PC-3 (cell line): ENCODE measurements at regions of chr7 and their contacts with region 1.

Region 1: DNA sequence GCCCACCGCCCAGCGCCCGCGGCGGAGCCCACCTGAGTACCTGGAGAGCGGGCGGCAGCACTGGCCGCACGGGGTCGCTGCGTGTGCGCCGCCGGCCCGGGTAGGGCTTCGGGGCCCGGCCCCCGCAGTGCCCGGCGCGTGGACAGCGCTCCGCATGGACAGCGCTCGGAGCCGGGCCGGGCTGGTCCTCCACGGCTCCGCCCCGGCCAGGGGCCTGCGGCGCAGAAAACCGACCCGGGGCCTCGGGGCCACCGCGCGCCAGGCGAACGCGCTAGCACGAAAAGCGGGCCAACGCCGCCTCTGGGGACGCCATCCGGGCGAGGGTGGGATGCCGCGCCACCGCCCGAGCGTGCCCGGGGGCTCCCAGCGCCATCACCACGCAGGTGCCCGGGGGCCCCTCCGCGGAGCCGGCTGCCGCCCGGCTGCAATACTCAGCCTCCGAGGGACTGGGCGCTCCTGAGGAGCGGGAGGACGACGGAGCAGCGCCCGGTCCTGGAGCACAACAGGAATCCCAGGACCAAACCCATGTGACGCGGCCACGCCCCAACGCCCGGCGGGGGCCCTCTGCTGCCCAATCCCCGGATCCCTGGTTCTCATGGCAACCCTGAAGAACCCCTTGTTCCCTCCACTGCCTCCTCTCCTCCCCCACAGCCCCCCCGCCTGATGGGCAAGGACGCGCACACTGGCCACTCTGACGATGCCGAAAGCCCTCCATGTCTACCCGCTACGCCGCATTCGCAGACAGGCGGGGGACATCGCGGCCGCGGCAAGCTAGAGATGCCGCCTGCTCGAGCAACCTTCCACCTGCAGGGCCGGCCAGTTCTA is at the start of gene GRB10:
- DNase-seq: peak; percentile 56
- ATAC-seq: peak; percentile 84
- H3K4me3 ChIP-seq: peak within 1 kb of the TSS; percentile 80
- H3K27ac ChIP-seq: peak within 1 kb of the TSS; percentile 57
- H3K4me1 ChIP-seq: peaks cover 7% of the 10 kb centered on the region; the same call in 1 of the 2 replicates
- H3K27me3 ChIP-seq: no peaks in the 10 kb centered on the region
- CTCF ChIP-seq: 0 out of 2 replicates have a peak, but pooled peaks have one; percentile 26
- total RNA-seq, gene GRB10: 61.3 and 89.8 TPM in 2 replicates

Region 2: DNA sequence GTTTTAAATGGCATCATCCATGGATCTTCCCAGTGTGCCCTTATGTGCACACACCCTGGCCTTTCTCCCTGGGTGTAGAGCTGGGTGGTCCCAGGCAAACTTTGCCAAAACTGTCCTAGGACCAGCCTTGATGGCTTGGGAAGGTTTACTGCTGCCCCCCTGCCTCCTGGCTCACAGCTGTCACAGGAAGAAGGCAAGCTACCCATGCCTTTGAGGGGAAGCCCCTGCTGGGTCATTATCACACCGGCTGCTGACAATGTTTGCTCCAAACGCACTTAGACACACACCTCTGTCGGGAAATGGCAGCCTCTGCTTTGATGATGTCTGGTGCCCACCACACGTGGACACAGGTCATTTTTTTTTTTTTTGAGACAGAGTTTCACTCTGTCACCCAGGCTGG is 307.3 kb before region 1 on chr7:
- CTCF ChIA-PET with region 1: no interaction called
- POLR2A ChIA-PET with region 1: no interaction called
- intact Hi-C with region 1: no loop called
- DNase-seq: no peak
- ATAC-seq: no peak
- H3K4me3 ChIP-seq: no peak overlapping the region
- H3K27ac ChIP-seq: no peak overlapping the region
- H3K4me1 ChIP-seq: no peaks in the 10 kb centered on the region
- H3K27me3 ChIP-seq: no peaks in the 10 kb centered on the region
- CTCF ChIP-seq: no peak

Region 3: GRCh38 chr7:50696810-50697582 is 85.6 kb before region 1 on chr7:
- CTCF ChIA-PET with region 1: no interaction called
- POLR2A ChIA-PET with region 1: no interaction called
- intact Hi-C with region 1: loop called (anchors 5 kb)
- DNase-seq: peak; percentile 46
- ATAC-seq: peak; percentile 53; the same call in 1 of the 2 replicates
- H3K4me3 ChIP-seq: no peak overlapping the region
- H3K27ac ChIP-seq: no peak overlapping the region
- H3K4me1 ChIP-seq: no peaks in the 10 kb centered on the region
- H3K27me3 ChIP-seq: no peaks in the 10 kb centered on the region
- CTCF ChIP-seq: peak; percentile 73

Region 4: DNA sequence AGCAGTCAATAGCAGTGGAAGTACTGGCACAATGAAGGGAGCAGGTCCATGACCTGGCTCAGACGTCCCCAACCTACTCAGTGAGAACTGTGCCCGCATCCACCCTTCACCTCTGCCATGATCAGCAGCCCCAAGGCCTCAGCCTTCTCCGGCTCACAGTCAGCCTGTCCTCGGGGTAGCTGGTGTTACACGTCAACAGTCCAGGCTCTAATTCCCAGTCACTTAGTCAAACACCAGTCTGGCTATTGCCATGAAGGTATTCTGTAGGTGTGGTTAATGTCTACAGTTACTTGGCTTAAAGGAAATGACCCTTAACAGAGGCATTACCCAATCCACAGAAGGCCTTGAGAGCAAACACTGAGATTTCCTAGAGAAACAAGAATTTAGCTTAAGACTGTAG is 49.0 kb before region 1 on chr7:
- CTCF ChIA-PET with region 1: no interaction called
- POLR2A ChIA-PET with region 1: no interaction called
- intact Hi-C with region 1: loop called (anchors 5 kb)
- DNase-seq: peak; percentile 90
- ATAC-seq: peak; percentile 99
- H3K4me3 ChIP-seq: no peak overlapping the region
- H3K27ac ChIP-seq: peak overlapping the region; percentile 60
- H3K4me1 ChIP-seq: peaks cover 31% of the 10 kb centered on the region
- H3K27me3 ChIP-seq: no peaks in the 10 kb centered on the region
- CTCF ChIP-seq: no peak

Region 5: GRCh38 chr7:50832744-50833143 is 50.1 kb after region 1 on chr7:
- CTCF ChIA-PET with region 1: no interaction called
- POLR2A ChIA-PET with region 1: no interaction called
- intact Hi-C with region 1: loop called (anchors 2 kb)
- DNase-seq: peak; percentile 97
- ATAC-seq: peak; percentile 92
- H3K4me3 ChIP-seq: no peak overlapping the region
- H3K27ac ChIP-seq: peak overlapping the region; percentile 98
- H3K4me1 ChIP-seq: peaks cover 60% of the 10 kb centered on the region
- H3K27me3 ChIP-seq: no peaks in the 10 kb centered on the region
- CTCF ChIP-seq: no peak